Aorta (tissue), 5 donors: ENCODE measurements at regions of chr10 and their contacts with region 1.

Region 1: GRCh38 chr10:80382989-80383388 is 25.4 kb upstream of the PRXL2A start:
- DNase-seq: no peak
- ATAC-seq: no peak
- H3K4me3 ChIP-seq: no peak overlapping the region
- H3K27ac ChIP-seq: no peak overlapping the region
- H3K4me1 ChIP-seq: no peaks in the 10 kb centered on the region
- H3K27me3 ChIP-seq: no peaks in the 10 kb centered on the region

Region 2: DNA sequence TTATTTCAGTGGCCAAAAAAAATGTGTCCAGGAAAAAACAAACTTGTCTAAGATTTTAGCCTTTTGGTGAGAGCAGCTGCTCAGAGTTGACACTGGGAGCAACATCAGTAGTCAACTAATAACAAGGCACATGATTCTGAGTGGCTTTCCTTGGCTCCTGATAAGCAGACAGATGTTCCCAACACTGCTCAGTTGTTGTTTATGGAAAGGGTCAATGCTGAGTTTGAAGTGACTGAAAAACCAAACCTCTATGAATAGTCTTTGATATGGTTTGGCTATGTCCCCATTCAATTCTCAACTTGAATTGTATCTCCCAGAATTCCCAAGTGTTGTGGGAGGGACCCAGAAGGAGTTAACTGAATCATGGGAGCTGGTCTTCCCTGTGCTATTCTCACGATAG is 38.7 kb before region 1 on chr10:
- intact Hi-C with region 1: no loop called
- DNase-seq: no peak
- ATAC-seq: no peak
- H3K4me3 ChIP-seq: no peak overlapping the region
- H3K27ac ChIP-seq: no peak overlapping the region
- H3K4me1 ChIP-seq: no peaks in the 10 kb centered on the region
- H3K27me3 ChIP-seq: no peaks in the 10 kb centered on the region

Region 3: DNA sequence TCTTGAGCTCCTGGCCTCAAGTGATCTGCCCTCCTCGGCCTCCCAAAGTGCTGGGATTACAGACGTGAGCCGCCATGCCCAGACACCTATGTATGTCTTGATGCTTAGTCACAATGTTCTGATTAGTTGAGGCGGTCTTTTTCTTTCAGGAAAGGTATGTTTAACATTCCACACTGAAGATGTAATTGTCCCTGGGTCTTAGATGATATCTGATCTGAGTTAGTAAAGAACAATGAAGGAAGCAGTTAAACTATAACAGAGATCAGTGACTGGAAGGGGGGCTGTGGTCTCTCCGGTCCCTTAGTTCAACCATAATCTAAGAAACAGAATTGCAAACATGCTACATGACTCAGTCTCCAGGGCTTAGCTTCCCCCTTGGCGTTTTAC is 123.2 kb after region 1 on chr10:
- intact Hi-C with region 1: loop called in 1 of 2 experiments (anchors 2 kb)
- DNase-seq: no peak
- ATAC-seq: no peak
- H3K4me3 ChIP-seq: no peak overlapping the region
- H3K27ac ChIP-seq: no peak overlapping the region
- H3K4me1 ChIP-seq: no peaks in the 10 kb centered on the region
- H3K27me3 ChIP-seq: no peaks in the 10 kb centered on the region